ENCODE measurements at regions of chr1 and their contacts with region 1.

Region 1: DNA sequence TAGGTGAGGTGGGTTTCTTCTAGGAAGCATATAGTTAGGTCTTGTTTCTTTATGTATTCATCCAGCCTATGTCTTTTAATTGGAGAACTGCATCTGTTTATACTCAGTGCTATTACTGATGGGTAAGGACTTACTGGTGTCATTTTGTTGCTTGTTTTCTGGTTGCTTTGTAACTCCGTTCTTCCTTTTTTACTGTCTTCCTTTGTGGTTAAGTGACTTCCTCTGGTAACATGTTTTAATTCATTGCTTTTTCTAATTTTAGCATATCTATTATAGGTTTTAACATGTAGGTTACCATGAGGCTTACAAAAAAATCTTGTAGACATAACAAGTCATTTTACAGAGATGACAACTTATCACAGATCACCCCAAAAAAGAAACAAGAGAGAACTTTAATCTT is 160.8 kb downstream of the VAV3 start:
- DNase-seq: peak in 1 of 2 donors; percentile 44
- ATAC-seq: peak; percentile 64 to 67 (median 64)
- H3K4me3 ChIP-seq: no peak overlapping the region
- H3K4me3 Mint-ChIP-seq: peak overlapping the region; percentile 68
- H3K27ac ChIP-seq: peak overlapping the region; percentile 57
- H3K27ac Mint-ChIP-seq: peak overlapping the region; percentile 35 to 73
- H3K4me1 ChIP-seq: peaks cover 13% of the 10 kb centered on the region
- H3K4me1 Mint-ChIP-seq: peaks cover 58 to 59% of the 10 kb centered on the region in 2 donors
- H3K27me3 ChIP-seq: no peaks in the 10 kb centered on the region
- H3K27me3 Mint-ChIP-seq: no peaks in the 10 kb centered on the region
- CTCF ChIP-seq: no peak

Region 2: GRCh38 chr1:107829061-107830040 is 25.2 kb after region 1 on chr1:
- intact Hi-C with region 1: loop called (anchors 2 kb)
- DNase-seq: peak in 1 of 2 donors; percentile 56
- ATAC-seq: peak; percentile 82 to 96 (median 92)
- H3K4me3 ChIP-seq: no peak overlapping the region
- H3K4me3 Mint-ChIP-seq: peak overlapping the region; percentile 88
- H3K27ac ChIP-seq: peak overlapping the region; percentile 65
- H3K27ac Mint-ChIP-seq: peak overlapping the region; percentile 87 to 90
- H3K4me1 ChIP-seq: peaks cover 37% of the 10 kb centered on the region
- H3K4me1 Mint-ChIP-seq: peaks cover 82 to 88% of the 10 kb centered on the region in 2 donors
- H3K27me3 ChIP-seq: no peaks in the 10 kb centered on the region
- H3K27me3 Mint-ChIP-seq: no peaks in the 10 kb centered on the region
- CTCF ChIP-seq: no peak

Measured in natural killer cell (primary cell).